ENCODE measurements at regions of chr15 and their contacts with region 1.

Region 1: GRCh38 chr15:90071208-90071807 is 31.0 kb downstream of the IDH2 start:
- DNase-seq: peak; percentile 57
- ATAC-seq: peak; percentile 81
- H3K4me3 ChIP-seq: no peak overlapping the region
- H3K27ac ChIP-seq: no peak overlapping the region
- H3K4me1 ChIP-seq: peaks cover 16% of the 10 kb centered on the region in 2 experiments
- H3K27me3 ChIP-seq: no peaks in the 10 kb centered on the region
- CTCF ChIP-seq: peak; percentile 80 to 84 (median 83); a peak in 5 of 6 replicates
- POLR2A ChIP-seq: no peak
- RAD21 ChIP-seq: peak; percentile 88

Region 2: DNA sequence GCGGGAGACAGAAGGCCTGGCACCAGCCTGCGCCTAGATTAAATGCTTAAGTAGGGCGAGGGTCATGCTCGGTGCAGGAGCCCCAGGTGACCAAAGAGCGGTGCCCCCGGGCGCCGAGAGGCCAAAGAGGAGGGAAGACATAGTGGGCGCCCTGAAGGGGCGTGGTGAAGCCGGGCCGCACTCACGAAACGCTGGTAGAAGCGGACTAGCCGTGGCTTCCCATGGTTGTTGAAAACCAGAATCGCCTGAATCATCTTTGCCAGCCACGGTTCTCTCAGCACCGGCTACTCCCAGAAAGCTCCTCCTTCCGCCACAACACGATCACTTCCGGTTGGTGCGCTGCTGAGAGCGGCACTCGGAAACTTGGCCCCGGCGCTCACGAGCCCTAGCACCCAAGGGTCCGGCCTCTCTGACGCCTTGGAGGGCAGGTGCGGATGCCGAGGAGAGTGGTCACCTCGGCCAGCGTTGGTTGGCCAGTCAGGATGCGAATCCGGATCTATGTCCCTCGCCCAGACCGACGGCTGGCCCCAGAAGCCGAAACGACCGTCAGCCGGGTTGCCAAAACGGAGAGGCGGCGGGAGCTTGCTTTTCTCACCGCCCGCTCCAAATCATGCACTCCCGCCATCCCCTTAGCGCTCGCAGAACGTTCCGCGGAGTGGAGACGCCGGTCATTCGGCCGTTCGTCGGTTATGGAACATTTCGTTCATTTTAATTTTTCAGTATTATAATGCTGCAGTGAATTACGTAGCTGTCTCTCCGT is 177.4 kb before region 1 on chr15 and contains the start of gene AP3S2:
- CTCF ChIA-PET with region 1: interaction called, 15 read pairs
- POLR2A ChIA-PET with region 1: no interaction called
- RAD21 ChIA-PET with region 1: no interaction called
- intact Hi-C with region 1: loop called (anchors 1 kb)
- DNase-seq: peak; percentile 92
- ATAC-seq: peak; percentile 86
- H3K4me3 ChIP-seq: peak within 1 kb of the TSS; percentile 68 to 85
- H3K27ac ChIP-seq: peak within 1 kb of the TSS; percentile 74
- H3K4me1 ChIP-seq: peaks cover 0 to 16% of the 10 kb centered on the region in 2 experiments; a peak in 2 of 4 replicates
- H3K27me3 ChIP-seq: no peaks in the 10 kb centered on the region
- CTCF ChIP-seq: no peak
- POLR2A ChIP-seq: no peak
- RAD21 ChIP-seq: peak; percentile 17; the same call in 1 of the 2 replicates
- total RNA-seq, gene AP3S2: 23.3 TPM

Region 3: GRCh38 chr15:90001683-90002427 is 69.5 kb before region 1 on chr15:
- CTCF ChIA-PET with region 1: interaction called, 3 read pairs
- POLR2A ChIA-PET with region 1: no interaction called
- RAD21 ChIA-PET with region 1: no interaction called
- intact Hi-C with region 1: loop called (anchors 5 kb)
- DNase-seq: no peak
- ATAC-seq: peak; percentile 18
- H3K4me3 ChIP-seq: peak overlapping the region; percentile 66 to 72
- H3K27ac ChIP-seq: peak overlapping the region; percentile 59
- H3K4me1 ChIP-seq: peaks cover 52 to 84% of the 10 kb centered on the region in 2 experiments
- H3K27me3 ChIP-seq: no peaks in the 10 kb centered on the region
- CTCF ChIP-seq: no peak
- POLR2A ChIP-seq: peak; percentile 8
- RAD21 ChIP-seq: no peak

Region 4: GRCh38 chr15:90624278-90624981 is 553.1 kb after region 1 on chr15:
- CTCF ChIA-PET with region 1: no interaction called
- POLR2A ChIA-PET with region 1: no interaction called
- RAD21 ChIA-PET with region 1: no interaction called
- intact Hi-C with region 1: no loop called
- DNase-seq: no peak
- ATAC-seq: no peak
- H3K4me3 ChIP-seq: no peak overlapping the region
- H3K27ac ChIP-seq: no peak overlapping the region
- H3K4me1 ChIP-seq: no peaks in the 10 kb centered on the region
- H3K27me3 ChIP-seq: no peaks in the 10 kb centered on the region
- CTCF ChIP-seq: no peak
- POLR2A ChIP-seq: no peak
- RAD21 ChIP-seq: no peak

Region 5: GRCh38 chr15:91116113-91117067 is 1045.1 kb after region 1 on chr15:
- CTCF ChIA-PET with region 1: no interaction called
- POLR2A ChIA-PET with region 1: no interaction called
- RAD21 ChIA-PET with region 1: no interaction called
- intact Hi-C with region 1: no loop called
- DNase-seq: no peak
- ATAC-seq: no peak
- H3K4me3 ChIP-seq: no peak overlapping the region
- H3K27ac ChIP-seq: no peak overlapping the region
- H3K4me1 ChIP-seq: no peaks in the 10 kb centered on the region
- H3K27me3 ChIP-seq: peaks cover 32% of the 10 kb centered on the region; the same call in 1 of the 2 replicates
- CTCF ChIP-seq: no peak
- POLR2A ChIP-seq: no peak
- RAD21 ChIP-seq: no peak